ENCODE measurements at regions of chr2 and their contacts with region 1.

Region 1: DNA sequence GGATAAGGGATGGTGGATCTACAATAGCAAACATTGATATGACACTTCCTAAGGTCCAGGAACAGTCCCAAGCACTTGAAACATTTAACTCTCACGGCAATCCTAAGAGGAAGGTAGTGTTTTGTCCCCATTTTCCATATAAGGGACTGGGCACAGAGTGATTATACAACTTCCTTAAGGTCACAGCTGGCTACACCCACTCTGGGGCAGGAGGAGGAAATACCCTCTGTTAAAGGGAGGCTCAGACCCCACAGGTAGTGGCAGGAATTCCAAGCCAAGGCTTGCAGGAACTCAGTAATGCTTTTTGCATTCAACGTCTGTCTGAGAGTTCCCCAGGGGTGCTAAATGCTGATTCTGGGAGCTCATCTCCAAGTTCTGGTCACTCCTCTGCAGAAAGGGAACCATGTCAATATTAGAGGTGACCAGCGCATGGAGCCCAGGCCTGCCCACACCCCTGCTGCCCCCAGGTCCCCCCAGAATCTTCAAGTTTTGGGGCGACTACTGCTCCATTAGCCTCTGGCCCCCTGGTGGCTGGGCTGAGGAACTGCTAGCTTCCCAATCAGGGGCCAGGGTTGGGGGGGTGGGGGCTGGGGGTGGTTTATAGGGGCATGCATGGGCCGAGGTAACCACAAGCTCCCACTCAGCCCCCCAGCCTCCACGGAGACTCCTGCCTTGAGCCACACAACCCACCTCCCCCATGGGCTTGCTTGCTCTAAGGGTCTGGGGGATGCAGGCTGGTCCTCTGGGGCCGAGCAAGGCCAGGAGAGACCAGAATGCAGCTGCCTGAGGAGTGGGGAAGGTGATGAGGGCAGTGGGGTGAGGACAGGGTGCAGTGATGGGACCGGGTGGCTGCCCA is 11.1 kb downstream of the OBSL1 start:
- DNase-seq: no peak
- H3K4me3 ChIP-seq: no peak overlapping the region
- H3K27ac ChIP-seq: no peak overlapping the region
- H3K4me1 ChIP-seq: no peaks in the 10 kb centered on the region
- H3K27me3 ChIP-seq: no peaks in the 10 kb centered on the region
- CTCF ChIP-seq: peak; percentile 66 to 70

Region 2: GRCh38 chr2:219406861-219407230 is 153.4 kb before region 1 on chr2:
- CTCF ChIA-PET with region 1: no interaction called
- dilution Hi-C with region 1: no loop called
- in situ Hi-C with region 1: no loop called
- intact Hi-C with region 1: no loop called
- DNase-seq: peak; percentile 29
- H3K4me3 ChIP-seq: no peak overlapping the region
- H3K27ac ChIP-seq: no peak overlapping the region
- H3K4me1 ChIP-seq: no peaks in the 10 kb centered on the region
- H3K27me3 ChIP-seq: no peaks in the 10 kb centered on the region
- CTCF ChIP-seq: no peak

Region 3: GRCh38 chr2:219597552-219598307 is 37.5 kb after region 1 on chr2 and contains the start of gene STK11IP:
- CTCF ChIA-PET with region 1: interaction called, 3 read pairs
- dilution Hi-C with region 1: no loop called
- in situ Hi-C with region 1: no loop called
- intact Hi-C with region 1: loop called (anchors 5 kb)
- DNase-seq: peak; percentile 97
- H3K4me3 ChIP-seq: peak within 1 kb of the TSS; percentile 59 to 74 (median 64)
- H3K27ac ChIP-seq: peak within 1 kb of the TSS; percentile 91
- H3K4me1 ChIP-seq: peaks cover 16% of the 10 kb centered on the region
- H3K27me3 ChIP-seq: no peaks in the 10 kb centered on the region
- CTCF ChIP-seq: no peak
- total RNA-seq, gene STK11IP: 14.5 to 27.6 TPM